K562 (cell line): ENCODE measurements at regions of chr10 and their contacts with region 1.

Region 1: DNA sequence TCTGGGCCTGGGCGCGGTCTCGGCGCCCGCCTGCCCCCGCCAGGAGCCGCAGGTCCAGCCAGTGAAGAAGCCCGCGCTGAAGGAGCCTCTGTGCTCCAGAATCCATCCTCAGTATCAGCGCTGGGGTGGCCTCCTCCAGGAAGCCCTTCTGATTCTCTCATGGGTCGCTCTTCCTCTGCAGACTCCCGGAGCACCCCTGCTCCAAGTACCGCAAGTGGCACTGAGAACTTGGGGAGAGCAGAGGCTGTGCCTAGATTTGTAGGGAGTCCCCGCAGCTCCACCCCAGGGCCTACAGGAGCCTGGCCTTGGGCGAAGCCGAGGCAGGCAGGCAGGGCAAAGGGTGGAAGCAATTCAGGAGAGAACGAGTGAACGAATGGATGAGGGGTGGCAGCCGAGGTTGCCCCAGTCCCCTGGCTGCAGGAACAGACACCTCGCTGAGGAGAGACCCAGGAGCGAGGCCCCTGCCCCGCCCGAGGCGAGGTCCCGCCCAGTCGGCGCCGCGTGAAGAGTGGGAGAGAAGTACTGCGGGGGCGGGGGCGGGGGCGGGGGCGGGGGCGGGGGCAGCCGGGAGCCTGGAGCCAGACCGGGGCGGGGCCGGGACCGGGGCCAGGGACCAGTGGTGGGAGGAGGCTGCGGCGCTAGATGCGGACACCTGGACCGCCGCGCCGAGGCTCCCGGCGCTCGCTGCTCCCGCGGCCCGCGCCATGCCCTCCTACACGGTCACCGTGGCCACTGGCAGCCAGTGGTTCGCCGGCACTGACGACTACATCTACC is at the start of gene ALOX5:
- DNase-seq: peak; percentile 89 to 97 (median 95)
- ATAC-seq: peak; percentile 92
- H3K4me3 ChIP-seq: peak within 1 kb of the TSS; percentile 40
- H3K27ac ChIP-seq: no peak within 1 kb of the TSS
- H3K4me1 ChIP-seq: peaks cover 30 to 34% of the 10 kb centered on the region in 2 experiments
- H3K27me3 ChIP-seq: peaks cover 0 to 14% of the 10 kb centered on the region in 2 experiments; a peak in 3 of 5 replicates
- CTCF ChIP-seq: no peak
- EP300 ChIP-seq: no peak
- POLR2A ChIP-seq: 0 out of 2 replicates have a peak, but pooled peaks have one; percentile 37
- RAD21 ChIP-seq: 0 out of 4 replicates have a peak, but pooled peaks of 1 of the 2 experiments have one; percentile 10
- polyA plus RNA-seq, gene ALOX5: 0.10 to 0.13 TPM

Region 2: GRCh38 chr10:45383682-45384330 is 10.0 kb after region 1 on chr10:
- CTCF ChIA-PET with region 1: no interaction called
- POLR2A ChIA-PET with region 1: interaction called, 10 read pairs
- in situ Hi-C with region 1: no loop called
- intact Hi-C with region 1: no loop called
- DNase-seq: no peak
- ATAC-seq: no peak
- H3K4me3 ChIP-seq: no peak overlapping the region
- H3K27ac ChIP-seq: no peak overlapping the region
- H3K4me1 ChIP-seq: peaks cover 2 to 14% of the 10 kb centered on the region in 2 experiments; a peak in 4 of 5 replicates
- H3K27me3 ChIP-seq: peaks cover 7 to 38% of the 10 kb centered on the region in 2 experiments; a peak in 3 of 5 replicates
- CTCF ChIP-seq: no peak
- EP300 ChIP-seq: no peak
- POLR2A ChIP-seq: no peak
- RAD21 ChIP-seq: no peak

Region 3: DNA sequence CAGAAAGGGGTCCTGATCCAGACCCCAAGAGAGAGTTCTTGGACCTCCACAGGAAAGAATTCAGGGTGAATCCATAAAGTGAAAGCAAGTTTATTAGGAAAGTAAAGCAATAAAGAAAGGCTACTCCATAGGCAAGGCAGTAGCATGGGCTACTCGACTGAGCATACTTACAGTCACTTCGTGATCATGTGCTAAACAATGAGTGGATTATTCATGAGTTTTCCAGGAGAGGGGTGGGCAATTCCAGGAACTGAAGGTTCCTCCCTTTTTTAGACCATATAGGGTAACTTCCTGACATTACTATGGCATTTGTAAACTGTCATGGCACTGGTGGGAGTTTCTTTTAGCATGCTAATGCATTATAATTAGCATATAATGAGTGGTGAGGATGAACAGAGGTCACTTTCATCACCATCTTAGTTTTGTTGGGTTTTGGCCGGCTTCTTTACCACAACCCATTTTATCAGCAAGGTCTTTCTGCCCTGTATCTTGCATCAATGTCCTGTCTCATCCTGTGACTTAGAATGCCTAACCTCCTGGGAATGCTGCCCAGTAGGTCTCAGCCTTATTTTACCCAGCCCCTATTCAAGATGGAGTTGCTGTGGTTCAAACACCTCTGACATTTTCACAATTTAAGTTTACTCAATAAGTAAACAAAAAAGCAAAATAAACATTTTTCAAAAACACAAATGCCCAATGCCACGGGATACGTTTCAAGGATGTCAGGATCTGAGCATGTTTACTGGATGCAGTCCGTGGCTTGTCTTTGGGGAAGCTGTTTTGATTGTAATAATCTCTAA is 37.2 kb after region 1 on chr10:
- CTCF ChIA-PET with region 1: no interaction called
- POLR2A ChIA-PET with region 1: interaction called, 3 read pairs
- in situ Hi-C with region 1: no loop called
- intact Hi-C with region 1: loop called (anchors 5 kb)
- DNase-seq: peak in 3 of 4 experiments; percentile 16 to 94 (median 61)
- ATAC-seq: peak; percentile 93
- H3K4me3 ChIP-seq: peak overlapping the region; percentile 28
- H3K27ac ChIP-seq: peak overlapping the region; percentile 86
- H3K4me1 ChIP-seq: peaks cover 9 to 44% of the 10 kb centered on the region in 2 experiments
- H3K27me3 ChIP-seq: no peaks in the 10 kb centered on the region
- CTCF ChIP-seq: no peak
- EP300 ChIP-seq: peak; percentile 60
- POLR2A ChIP-seq: peak; percentile 93
- RAD21 ChIP-seq: peak; percentile 9 to 39; a peak in 2 of 4 replicates

Region 4: GRCh38 chr10:45569471-45569870 is 195.7 kb after region 1 on chr10:
- CTCF ChIA-PET with region 1: no interaction called
- POLR2A ChIA-PET with region 1: no interaction called
- in situ Hi-C with region 1: no loop called
- intact Hi-C with region 1: no loop called
- DNase-seq: no peak
- ATAC-seq: no peak
- H3K4me3 ChIP-seq: no peak overlapping the region
- H3K27ac ChIP-seq: no peak overlapping the region
- H3K4me1 ChIP-seq: peaks cover 0 to 3% of the 10 kb centered on the region in 2 experiments; a peak in 1 of 5 replicates
- H3K27me3 ChIP-seq: no peaks in the 10 kb centered on the region
- CTCF ChIP-seq: no peak
- EP300 ChIP-seq: no peak
- POLR2A ChIP-seq: no peak
- RAD21 ChIP-seq: no peak